AG04450 (cell line): ENCODE measurements at regions of chr1 and their contacts with region 1.

Region 1: GRCh38 chr1:180515864-180516388 is 13.5 kb upstream of the ACBD6 start:
- DNase-seq: peak; percentile 72
- H3K4me3 ChIP-seq: no peak overlapping the region
- H3K27ac ChIP-seq: peak overlapping the region; percentile 71
- H3K27me3 ChIP-seq: no peaks in the 10 kb centered on the region
- CTCF ChIP-seq: peak; percentile 81

Region 2: DNA sequence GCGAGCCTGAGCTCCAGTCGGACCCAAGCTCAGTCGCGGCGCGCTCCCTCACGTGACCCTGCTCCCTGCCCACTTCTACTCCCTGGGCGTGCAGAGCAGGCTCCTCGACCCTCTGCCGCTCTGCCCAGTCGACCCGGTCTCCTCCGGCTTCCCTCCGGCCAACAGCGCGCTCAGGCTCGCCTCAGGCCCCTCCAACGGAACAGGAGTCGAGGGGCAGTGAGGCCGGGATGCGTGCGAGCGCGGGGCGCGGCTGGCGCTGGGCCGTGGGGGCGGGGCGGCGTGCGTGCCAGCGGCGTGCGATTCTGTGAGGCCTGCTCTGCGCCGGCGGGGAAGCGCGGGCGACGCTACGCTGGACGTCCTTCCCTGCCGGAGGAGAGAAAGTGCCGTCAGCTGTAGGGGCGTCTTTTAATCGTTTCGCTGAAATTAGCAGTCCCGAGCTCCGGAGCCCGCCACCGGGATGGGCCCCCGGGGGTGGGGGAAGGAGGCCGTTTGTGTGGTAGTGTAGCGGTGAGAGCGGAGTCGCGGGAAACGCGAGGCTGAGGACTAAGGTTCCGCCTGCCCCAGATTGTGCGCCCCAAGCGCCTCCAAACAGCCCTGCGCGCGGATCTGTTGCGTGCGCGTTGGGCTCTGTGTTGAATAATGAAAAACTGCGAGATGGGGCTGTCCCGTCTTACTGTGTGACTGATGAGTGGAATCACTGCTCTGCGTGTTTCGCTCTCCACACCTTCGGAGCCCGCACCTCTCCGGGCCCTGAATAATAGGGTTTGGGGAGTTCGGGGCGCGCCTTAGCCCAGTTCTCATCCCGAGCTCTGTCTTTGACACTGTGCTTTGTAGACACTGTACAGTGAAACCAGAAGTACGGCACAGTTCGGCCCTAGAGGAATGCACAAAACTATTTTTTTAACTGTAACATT is 13.3 kb before region 1 on chr1 and contains the start of gene ACBD6:
- CTCF ChIA-PET with region 1: interaction called, 15 read pairs
- POLR2A ChIA-PET with region 1: interaction called, 3 read pairs
- DNase-seq: no peak
- H3K4me3 ChIP-seq: peak within 1 kb of the TSS; percentile 94
- H3K27ac ChIP-seq: peak within 1 kb of the TSS; percentile 94
- H3K27me3 ChIP-seq: no peaks in the 10 kb centered on the region
- CTCF ChIP-seq: peak; percentile 30
- polyA plus RNA-seq, gene ACBD6: 84.1 and 87.6 TPM in 2 replicates

Region 3: DNA sequence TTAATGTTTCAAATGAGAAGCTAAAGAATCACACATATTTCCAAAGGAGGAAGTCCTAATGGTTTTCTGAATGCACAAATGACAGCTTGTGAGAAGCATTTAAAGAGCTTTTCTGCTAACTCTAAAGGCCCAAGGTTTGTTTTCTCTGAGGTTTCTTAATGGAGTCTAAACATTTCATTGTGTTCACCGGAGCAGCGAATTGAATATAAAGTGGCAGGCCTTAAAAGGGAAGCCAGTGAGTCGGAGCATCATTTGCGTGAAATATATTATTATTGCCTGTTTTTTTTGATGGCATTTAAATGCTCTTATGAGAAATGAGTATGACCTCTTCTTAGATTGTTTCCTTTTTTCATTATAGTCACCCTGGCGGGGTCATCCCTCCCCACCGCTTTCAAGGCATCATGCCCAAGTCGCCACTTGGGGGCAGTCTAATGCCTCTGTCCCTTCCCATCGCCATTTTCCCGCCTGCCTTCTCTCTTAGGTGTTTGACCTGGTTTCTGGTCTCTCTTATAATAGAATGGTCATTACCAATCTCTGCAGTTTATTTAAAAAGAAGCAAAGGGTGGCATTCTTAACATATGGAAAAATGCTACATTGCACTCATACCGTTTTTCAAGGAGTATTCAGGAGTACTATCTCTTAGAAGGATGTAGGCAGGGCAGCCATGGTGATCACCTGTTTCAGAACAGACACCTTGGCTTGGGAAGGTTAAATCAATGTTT is 17.5 kb after region 1 on chr1:
- CTCF ChIA-PET with region 1: interaction called, 37 read pairs
- POLR2A ChIA-PET with region 1: interaction called, 6 read pairs
- DNase-seq: no peak
- H3K4me3 ChIP-seq: no peak overlapping the region
- H3K27ac ChIP-seq: no peak overlapping the region
- H3K27me3 ChIP-seq: no peaks in the 10 kb centered on the region
- CTCF ChIP-seq: peak; percentile 88

Region 4: DNA sequence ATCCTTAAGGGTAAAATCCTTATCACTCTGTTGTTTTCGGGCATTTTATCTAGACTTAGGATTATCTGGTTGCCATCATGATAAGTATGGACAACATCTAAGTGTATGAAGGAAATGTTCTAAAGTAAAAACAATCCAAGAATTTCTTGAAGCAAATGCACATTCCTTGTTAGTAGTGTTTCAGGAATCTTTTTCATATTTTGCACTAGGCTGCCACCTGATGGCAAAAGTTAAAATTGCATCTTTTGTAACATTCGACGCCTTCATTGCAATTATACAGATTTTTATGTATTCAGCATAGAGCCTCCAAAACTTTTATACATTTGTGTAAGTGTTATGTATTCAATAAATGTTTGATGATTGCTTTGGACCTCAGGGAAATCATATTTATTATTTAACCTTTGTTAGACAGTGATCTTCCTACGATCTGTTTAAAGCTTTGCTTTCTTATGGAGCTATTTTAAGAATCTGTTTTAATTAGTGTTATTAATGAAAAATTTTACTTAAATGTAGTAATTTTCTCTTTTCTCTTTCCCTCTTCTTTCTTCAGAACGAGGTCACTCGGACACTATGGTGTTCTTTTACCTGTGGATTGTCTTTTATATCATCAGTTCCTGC is 347.3 kb after region 1 on chr1:
- CTCF ChIA-PET with region 1: interaction called, 131 read pairs
- POLR2A ChIA-PET with region 1: interaction called, 6 read pairs
- DNase-seq: peak; percentile 26
- H3K4me3 ChIP-seq: no peak overlapping the region
- H3K27ac ChIP-seq: no peak overlapping the region
- H3K27me3 ChIP-seq: no peaks in the 10 kb centered on the region
- CTCF ChIP-seq: peak; percentile 62